ENCODE measurements at regions of chr1 and their contacts with region 1.

Region 1: GRCh38 chr1:2314803-2315673 is 76.3 kb downstream of the MORN1 start:
- DNase-seq: no peak
- H3K4me3 ChIP-seq: peak overlapping the region; percentile 54
- CTCF ChIP-seq: peak; percentile 73

Region 2: GRCh38 chr1:2253797-2254480 is 61.1 kb before region 1 on chr1:
- CTCF ChIA-PET with region 1: no interaction called
- POLR2A ChIA-PET with region 1: no interaction called
- DNase-seq: no peak
- H3K4me3 ChIP-seq: no peak overlapping the region
- CTCF ChIP-seq: no peak

Region 3: DNA sequence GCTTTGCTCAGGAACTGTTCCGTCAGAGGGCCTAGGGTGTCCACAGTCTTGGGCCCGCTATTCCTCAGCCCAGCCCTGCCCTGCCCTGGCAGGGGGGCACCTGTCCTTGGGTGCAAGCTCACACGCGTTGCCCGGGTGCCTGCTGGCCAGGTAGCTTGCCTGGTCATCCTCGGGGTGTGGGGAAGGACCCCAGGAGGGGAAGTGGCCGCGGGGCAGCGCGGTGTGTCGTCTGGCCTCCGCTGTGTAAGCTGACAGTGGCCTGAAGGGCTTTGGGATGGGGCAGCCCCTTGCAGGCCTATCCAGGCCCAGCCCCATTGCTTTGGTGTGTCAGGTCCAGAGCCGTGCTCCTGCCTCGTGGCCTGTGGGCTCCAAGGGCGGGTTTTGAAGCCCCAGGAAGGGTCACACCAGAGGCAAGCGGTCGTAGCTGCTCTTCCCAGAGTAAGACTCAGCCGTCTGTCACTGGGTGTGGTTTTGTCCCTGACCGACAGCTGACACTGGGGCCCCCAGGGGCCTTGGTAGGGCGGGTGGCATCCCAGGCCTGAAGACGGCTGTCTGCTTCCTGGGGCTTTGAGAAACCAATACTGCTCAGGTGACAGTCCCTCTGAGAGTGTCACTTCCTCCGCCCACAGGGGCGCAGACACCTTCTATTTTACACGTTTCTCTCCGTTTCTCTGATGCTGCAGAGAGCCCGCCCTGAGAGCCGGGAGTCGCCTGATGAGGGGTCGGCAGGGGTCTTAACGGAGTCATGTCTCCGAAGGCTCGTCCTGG is 14.8 kb before region 1 on chr1:
- CTCF ChIA-PET with region 1: interaction called, 12 read pairs
- POLR2A ChIA-PET with region 1: interaction called, 4 read pairs
- DNase-seq: no peak
- H3K4me3 ChIP-seq: no peak overlapping the region
- CTCF ChIP-seq: no peak